HCT116 (cell line): ENCODE measurements at regions of chr10 and their contacts with region 1.

Region 1: DNA sequence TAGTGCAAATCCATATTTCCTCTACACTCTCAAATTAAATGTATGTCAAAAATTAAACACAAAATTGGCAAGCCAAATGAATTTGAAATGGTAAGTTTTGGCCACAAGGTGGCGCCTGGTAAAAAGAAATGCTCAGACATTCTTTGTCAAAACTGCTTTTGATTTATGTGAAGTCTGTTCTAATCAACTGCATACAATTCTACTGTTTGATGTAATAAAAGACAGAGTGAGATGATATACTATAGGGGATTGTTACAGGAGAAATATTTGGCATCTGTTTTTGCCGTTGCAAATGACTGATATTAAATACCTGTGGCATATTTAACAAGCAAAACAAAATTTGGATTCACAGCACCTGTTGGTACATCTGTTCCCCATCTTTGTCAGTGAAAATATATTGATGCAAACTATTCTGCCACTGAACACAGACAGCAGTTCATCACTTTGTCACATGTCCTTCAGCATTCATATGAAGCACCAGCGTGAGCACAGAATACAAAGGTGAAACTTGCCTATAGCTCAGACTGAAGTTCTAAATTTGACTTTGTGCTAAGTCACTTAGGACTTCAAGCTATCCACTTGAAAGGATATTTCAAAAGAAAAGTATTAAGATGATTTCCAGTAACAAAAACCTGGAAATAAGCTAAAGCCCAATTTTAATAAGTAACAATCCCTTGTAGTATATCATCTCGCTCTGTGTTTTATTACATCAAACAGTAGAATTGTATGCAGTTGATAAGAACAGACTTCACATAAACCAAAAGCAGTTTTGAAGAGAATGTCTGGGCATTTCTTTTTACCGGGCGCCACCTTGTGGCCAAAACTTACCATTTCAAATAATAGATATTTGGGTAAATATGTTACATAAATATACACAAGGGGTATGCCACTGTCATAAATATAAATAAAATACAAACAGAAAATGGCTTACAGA is 10.2 kb upstream of the CH25H start:
- DNase-seq: peak; percentile 38
- ATAC-seq: peak; percentile 52
- H3K4me3 ChIP-seq: no peak overlapping the region
- H3K27ac ChIP-seq: 0 out of 2 replicates have a peak overlapping the region, but pooled peaks have one; percentile 19
- H3K4me1 ChIP-seq: peaks cover 4 to 5% of the 10 kb centered on the region in 2 experiments; a peak in 2 of 4 replicates
- H3K27me3 ChIP-seq: no peaks in the 10 kb centered on the region
- CTCF ChIP-seq: peak; percentile 50 to 79 (median 74)
- POLR2A ChIP-seq: no peak
- RAD21 ChIP-seq: peak; percentile 74

Region 2: GRCh38 chr10:88194041-88194887 is 1023.1 kb before region 1 on chr10:
- CTCF ChIA-PET with region 1: no interaction called
- POLR2A ChIA-PET with region 1: no interaction called
- RAD21 ChIA-PET with region 1: no interaction called
- intact Hi-C with region 1: no loop called
- DNase-seq: peak; percentile 19
- ATAC-seq: peak; percentile 52
- H3K4me3 ChIP-seq: no peak overlapping the region
- H3K27ac ChIP-seq: no peak overlapping the region
- H3K4me1 ChIP-seq: peaks cover 0 to 7% of the 10 kb centered on the region in 2 experiments; a peak in 2 of 4 replicates
- H3K27me3 ChIP-seq: no peaks in the 10 kb centered on the region
- CTCF ChIP-seq: no peak
- POLR2A ChIP-seq: no peak
- RAD21 ChIP-seq: no peak

Region 3: GRCh38 chr10:88835096-88835909 is 382.0 kb before region 1 on chr10:
- CTCF ChIA-PET with region 1: interaction called, 8 read pairs
- POLR2A ChIA-PET with region 1: no interaction called
- RAD21 ChIA-PET with region 1: no interaction called
- intact Hi-C with region 1: loop called (anchors 2 kb)
- DNase-seq: peak; percentile 83
- ATAC-seq: peak; percentile 97
- H3K4me3 ChIP-seq: no peak overlapping the region
- H3K27ac ChIP-seq: no peak overlapping the region
- H3K4me1 ChIP-seq: peaks cover 0 to 8% of the 10 kb centered on the region in 2 experiments; a peak in 1 of 4 replicates
- H3K27me3 ChIP-seq: no peaks in the 10 kb centered on the region
- CTCF ChIP-seq: peak; percentile 82 to 97 (median 93)
- POLR2A ChIP-seq: no peak
- RAD21 ChIP-seq: peak; percentile 99

Region 4: DNA sequence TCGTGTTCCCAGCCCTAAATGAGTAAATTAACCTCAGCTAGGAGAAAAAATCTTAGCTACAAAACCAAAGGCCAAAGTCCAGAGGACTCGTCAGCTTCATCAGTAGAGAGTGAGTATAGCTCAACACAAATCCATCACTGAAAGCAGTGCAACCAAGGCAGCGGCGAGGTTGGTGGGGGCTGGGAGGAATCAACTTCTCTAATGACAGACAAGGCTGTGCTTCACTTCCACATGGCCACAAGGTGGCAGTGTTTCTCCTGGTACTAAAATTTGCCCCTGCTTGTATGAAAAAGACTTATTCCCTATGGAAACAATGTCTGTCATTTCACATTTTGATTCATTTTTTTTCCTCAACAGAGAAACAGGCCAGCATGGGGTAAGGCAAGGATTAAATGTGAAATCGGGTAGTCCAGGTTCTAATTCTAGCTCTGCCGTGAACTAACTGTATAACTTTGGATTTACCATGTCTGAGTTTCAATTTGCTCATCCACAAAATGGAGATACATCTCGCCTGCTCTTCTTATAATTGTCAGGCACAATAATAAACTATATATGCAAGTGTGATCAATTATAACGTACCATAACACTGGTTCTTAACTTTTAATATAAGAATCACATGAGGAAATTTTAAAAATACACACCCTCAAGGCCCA is 187.4 kb before region 1 on chr10:
- CTCF ChIA-PET with region 1: interaction called, 21 read pairs
- POLR2A ChIA-PET with region 1: no interaction called
- RAD21 ChIA-PET with region 1: interaction called, 3 read pairs
- intact Hi-C with region 1: loop called (anchors 1 kb)
- DNase-seq: peak; percentile 60
- ATAC-seq: peak; percentile 81
- H3K4me3 ChIP-seq: no peak overlapping the region
- H3K27ac ChIP-seq: no peak overlapping the region
- H3K4me1 ChIP-seq: peaks cover 11 to 17% of the 10 kb centered on the region in 2 experiments; a peak in 3 of 4 replicates
- H3K27me3 ChIP-seq: no peaks in the 10 kb centered on the region
- CTCF ChIP-seq: peak; percentile 82 to 83 (median 82)
- POLR2A ChIP-seq: no peak
- RAD21 ChIP-seq: peak; percentile 95

Region 5: DNA sequence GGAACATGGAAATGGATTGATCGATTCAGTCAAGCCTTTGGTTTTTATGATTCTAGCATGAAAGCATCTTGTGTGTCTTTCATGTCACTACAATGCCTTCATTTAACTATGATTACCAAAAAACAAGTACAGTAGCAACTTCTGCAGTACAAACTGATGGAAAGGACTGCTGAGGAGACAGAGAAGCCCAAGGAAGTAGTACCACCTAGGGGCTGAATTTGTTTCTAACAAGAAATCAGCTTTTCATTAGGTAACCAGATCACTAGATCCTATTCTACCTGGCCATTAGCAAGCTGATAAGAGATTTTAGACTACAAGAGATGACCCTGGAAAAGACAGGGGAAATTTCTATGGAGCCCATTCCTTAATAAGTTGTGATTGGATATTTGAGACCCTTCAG is 171.9 kb after region 1 on chr10:
- CTCF ChIA-PET with region 1: interaction called, 5 read pairs
- POLR2A ChIA-PET with region 1: interaction called, 3 read pairs
- RAD21 ChIA-PET with region 1: no interaction called
- intact Hi-C with region 1: loop called (anchors 1 kb)
- DNase-seq: peak; percentile 22
- ATAC-seq: peak; percentile 38; the same call in 1 of the 2 replicates
- H3K4me3 ChIP-seq: no peak overlapping the region
- H3K27ac ChIP-seq: no peak overlapping the region
- H3K4me1 ChIP-seq: peaks cover 2 to 11% of the 10 kb centered on the region in 2 experiments; a peak in 3 of 4 replicates
- H3K27me3 ChIP-seq: no peaks in the 10 kb centered on the region
- CTCF ChIP-seq: peak in 2 of 3 experiments; percentile 44 to 70; a peak in 3 of 6 replicates
- POLR2A ChIP-seq: no peak
- RAD21 ChIP-seq: peak; percentile 81